ENCODE measurements at regions of chr5 and their contacts with region 1.

Region 1: DNA sequence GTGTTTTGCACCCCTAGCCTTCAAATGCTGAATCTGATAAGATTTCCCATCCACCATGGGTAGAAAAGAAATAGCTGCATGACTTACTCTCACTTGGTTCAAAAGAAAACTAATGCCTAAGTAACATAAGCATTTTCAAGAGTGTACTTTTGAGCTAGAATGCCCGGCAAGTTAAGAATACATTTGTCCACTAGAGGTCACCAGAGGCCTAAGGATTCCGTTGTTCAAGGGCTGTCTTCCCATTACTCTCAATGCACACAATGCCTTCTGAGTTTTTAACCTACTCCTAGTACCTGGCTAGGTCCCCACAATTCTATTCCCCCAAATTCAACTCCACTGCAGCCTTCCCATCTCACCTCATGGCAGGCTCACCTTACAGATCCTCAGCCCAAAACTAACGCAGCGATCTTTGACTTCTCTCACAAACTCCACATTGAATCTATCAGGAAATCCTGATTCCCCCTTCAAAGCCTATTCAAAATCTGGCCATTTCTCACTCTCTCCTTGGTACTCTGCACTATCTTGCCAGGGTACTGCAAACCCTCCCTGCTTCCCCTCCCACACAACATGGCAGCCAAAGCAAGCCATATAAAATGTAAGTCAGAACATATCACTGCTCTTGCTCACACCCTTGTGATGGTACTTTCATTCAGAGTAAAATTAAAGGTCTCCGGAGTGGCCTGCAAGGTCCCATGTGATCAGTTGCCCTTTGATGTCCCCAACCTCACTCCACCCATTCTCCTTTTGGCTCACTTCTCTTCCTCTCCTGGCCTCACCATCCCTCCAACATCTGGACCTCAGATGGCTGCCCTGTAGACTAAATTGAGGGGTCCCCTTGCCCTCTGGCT is 13.4 kb downstream of the OXCT1 start:
- DNase-seq: peak; percentile 49
- H3K4me3 Mint-ChIP-seq: no peak overlapping the region
- H3K27ac Mint-ChIP-seq: no peak overlapping the region
- H3K4me1 Mint-ChIP-seq: peaks cover 35% of the 10 kb centered on the region
- H3K27me3 Mint-ChIP-seq: no peaks in the 10 kb centered on the region

Region 2: GRCh38 chr5:41869739-41870626 is 13.1 kb after region 1 on chr5 and contains the start of gene OXCT1:
- intact Hi-C with region 1: loop called (anchors 2 kb)
- DNase-seq: peak; percentile 93
- H3K4me3 Mint-ChIP-seq: peak within 1 kb of the TSS; percentile 92
- H3K27ac Mint-ChIP-seq: peak within 1 kb of the TSS; percentile 88
- H3K4me1 Mint-ChIP-seq: peaks cover 54% of the 10 kb centered on the region
- H3K27me3 Mint-ChIP-seq: no peaks in the 10 kb centered on the region
- total RNA-seq, gene OXCT1: 118 and 123 TPM in 2 replicates

Region 3: GRCh38 chr5:41924872-41925554 is 68.1 kb after region 1 on chr5 and contains the start of gene FBXO4:
- intact Hi-C with region 1: loop called (anchors 1 kb)
- DNase-seq: peak; percentile 86
- H3K4me3 Mint-ChIP-seq: peak within 1 kb of the TSS; percentile 90
- H3K27ac Mint-ChIP-seq: peak within 1 kb of the TSS; percentile 98
- H3K4me1 Mint-ChIP-seq: peaks cover 17% of the 10 kb centered on the region
- H3K27me3 Mint-ChIP-seq: no peaks in the 10 kb centered on the region
- total RNA-seq, gene FBXO4: 16.1 and 17.2 TPM in 2 replicates

Region 4: DNA sequence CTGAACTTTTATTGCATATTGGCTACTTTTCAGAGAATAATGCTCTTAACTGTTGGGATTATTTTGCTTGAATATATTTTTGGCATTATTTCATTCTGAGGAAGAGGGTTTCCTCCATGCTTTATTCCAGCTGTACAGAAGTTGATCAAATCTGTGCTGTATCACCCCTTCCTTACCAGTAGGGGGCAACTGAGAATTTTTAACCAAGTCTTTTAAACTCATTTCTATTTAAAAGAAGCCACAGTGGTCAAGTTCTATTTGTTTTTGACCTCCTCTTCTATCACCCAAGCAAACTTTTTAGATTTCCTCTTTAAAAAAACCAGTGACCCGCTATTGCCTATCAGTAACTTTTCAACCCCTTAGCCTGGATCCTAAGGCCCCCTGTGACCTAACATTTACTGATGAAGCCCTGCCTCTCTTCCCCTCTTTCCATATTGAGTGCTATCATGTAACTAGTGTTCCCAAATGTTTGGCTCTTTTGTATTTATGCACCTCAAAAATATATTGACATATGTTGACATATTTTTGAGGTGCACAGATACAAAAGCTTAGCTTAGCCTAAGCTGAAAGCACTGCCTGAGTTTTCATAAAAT is 148.8 kb after region 1 on chr5:
- intact Hi-C with region 1: loop called (anchors 2 kb)
- DNase-seq: no peak
- H3K4me3 Mint-ChIP-seq: no peak overlapping the region
- H3K27ac Mint-ChIP-seq: no peak overlapping the region
- H3K4me1 Mint-ChIP-seq: no peaks in the 10 kb centered on the region
- H3K27me3 Mint-ChIP-seq: peaks cover 7% of the 10 kb centered on the region

Region 5: DNA sequence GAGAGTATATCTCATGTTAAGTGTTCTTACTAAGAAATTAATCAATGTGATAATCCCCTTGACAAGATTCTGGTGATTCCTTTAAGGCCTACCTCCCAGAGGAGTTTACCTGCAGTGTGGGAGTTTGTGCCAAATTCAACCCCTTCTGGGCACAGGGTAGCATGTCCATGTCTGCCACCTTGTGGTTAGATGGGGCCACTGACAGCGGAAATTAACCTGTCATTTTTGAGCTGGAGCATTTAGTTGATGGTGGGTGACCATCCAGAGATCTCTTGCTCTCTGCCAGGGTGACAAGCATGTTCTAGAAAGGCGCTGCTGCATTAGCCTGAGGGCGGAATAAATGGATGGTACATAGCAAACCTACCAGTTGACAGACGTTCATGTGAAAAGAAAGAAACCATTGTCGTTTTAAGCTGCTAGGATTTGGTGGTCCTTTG is 200.4 kb after region 1 on chr5:
- intact Hi-C with region 1: loop called (anchors 1 kb)
- DNase-seq: peak; percentile 30
- H3K4me3 Mint-ChIP-seq: no peak overlapping the region
- H3K27ac Mint-ChIP-seq: no peak overlapping the region
- H3K4me1 Mint-ChIP-seq: no peaks in the 10 kb centered on the region
- H3K27me3 Mint-ChIP-seq: peaks cover 9% of the 10 kb centered on the region

Region 6: GRCh38 chr5:42756606-42757601 is 900.0 kb after region 1 on chr5 and contains the start of gene CCDC152:
- intact Hi-C with region 1: loop called (anchors 10 kb)
- DNase-seq: peak; percentile 32
- H3K4me3 Mint-ChIP-seq: peak within 1 kb of the TSS; percentile 81
- H3K27ac Mint-ChIP-seq: peak within 1 kb of the TSS; percentile 31
- H3K4me1 Mint-ChIP-seq: peaks cover 16% of the 10 kb centered on the region
- H3K27me3 Mint-ChIP-seq: peaks cover 14% of the 10 kb centered on the region
- total RNA-seq, gene CCDC152: 5.5 and 6.0 TPM in 2 replicates

Measured in activated T-helper 2 cell treated with anti-CD3 and anti-CD28 coated beads, Interferon-gamma antibody, Interleukin-2, Interleukin-4, amounts not matched to agents 10 μg/mL and 5 μg/mL and 100 μg/mL, durations not matched to agents 14 hours and 24 hours and 36 hours (primary cell).